GM10248 (cell line): ENCODE measurements at regions of chr17 and their contacts with region 1.

Region 1: GRCh38 chr17:73710095-73710592 is 65.9 kb upstream of the SDK2 start:
- DNase-seq: peak; percentile 76
- CTCF ChIP-seq: peak; percentile 69

Region 2: DNA sequence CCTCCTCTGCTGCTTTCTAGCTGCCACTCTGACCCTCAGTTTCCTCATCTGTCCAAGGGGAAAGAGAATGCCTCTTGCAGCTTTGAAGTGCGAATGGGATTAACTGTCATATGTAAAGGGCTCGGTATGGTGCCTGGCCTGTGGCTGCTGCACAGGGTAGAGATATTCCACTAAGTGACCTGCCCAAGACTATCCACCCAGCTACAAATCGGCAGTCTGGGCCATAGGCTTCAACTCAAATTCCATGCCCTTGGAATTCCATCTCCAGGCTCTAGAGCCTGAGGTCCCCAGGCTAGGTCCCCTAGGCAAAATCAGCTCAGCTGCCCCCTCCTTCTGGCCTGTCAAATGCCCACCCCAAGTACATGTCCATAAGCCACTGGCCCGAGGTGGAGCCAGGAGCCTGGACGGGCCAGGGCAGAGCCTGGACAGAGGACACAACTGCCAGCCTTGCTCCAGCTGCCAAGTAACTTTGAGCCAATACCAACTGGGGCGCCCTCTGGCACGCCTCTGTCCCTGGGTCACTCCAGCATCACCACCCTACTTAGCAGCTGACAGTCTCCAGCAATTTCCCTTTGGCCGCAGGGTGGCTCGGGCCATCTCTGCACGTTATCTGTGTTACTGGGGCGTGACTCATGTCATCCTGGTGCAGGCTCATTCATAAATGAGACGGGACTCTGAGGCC is 123.1 kb before region 1 on chr17:
- CTCF ChIA-PET with region 1: interaction called, 17 read pairs
- POLR2A ChIA-PET with region 1: no interaction called
- DNase-seq: no peak
- CTCF ChIP-seq: no peak

Region 3: DNA sequence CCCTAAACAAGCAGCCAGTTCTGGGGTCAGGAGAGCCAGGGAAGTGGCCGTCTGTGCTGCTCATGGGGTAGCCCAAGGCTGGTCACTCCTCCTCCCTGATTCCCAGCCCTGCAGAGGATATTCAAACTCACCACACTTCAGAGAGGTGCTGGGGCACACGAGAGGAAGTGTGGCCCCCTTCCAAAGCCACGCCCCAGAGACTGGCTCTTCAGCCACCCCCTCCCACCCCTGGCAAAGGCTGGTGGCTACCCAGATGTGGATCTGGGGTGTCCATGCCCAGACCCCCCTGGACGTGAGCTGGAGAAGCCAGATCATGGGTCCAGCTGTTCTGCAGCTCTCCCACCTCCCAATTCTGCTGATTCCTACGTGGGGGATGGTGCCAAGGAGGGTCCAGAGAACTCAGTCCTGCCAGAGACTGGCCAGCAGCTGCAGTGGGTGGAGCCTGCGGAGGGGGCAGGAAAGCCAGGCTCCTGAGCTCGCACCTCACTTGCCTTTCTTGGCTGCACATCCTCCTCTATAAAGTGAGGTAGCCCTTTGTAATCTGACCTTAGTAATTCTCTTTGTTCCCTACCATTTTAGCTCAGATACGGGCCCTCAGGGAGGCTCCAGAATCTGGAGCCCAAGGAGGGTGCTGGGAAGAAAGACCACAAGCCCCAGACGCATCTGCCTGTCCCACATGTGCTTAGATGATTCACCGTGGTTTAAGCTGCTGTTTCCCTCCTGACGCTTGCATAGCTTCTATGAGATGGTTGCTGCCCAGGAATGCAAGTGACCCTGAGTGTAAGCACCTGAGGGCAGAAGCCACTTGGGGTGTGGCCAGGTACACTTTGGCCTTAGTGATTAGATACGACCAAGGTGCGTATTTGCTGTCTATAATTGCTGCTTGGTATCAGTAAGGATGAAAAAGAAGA is 81.2 kb before region 1 on chr17:
- CTCF ChIA-PET with region 1: no interaction called
- POLR2A ChIA-PET with region 1: no interaction called
- DNase-seq: no peak
- CTCF ChIP-seq: no peak

Region 4: DNA sequence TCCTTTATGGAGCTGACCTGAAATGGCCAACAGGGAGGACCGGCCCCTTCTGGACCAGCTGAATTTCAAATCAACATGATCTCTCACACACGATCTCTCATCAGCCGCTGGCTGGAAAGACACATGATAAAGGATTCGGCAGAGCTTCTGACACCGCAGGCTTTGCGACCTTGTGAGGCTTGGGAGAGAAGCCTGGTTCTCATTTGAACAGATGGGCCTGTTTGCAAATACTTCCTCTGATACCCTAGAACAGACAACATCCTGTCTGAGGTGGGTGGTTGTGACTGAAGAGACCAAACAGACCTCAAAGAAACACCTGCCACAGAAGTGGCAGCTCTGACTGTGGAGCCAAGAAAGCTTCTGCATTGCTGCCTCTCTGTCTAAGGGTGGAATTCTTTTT is 12.0 kb after region 1 on chr17:
- CTCF ChIA-PET with region 1: interaction called, 24 read pairs
- POLR2A ChIA-PET with region 1: no interaction called
- DNase-seq: no peak
- CTCF ChIP-seq: no peak